AG04449 (cell line): ENCODE measurements at regions of chr14 and their contacts with region 1.

Region 1: GRCh38 chr14:75660630-75661494 is at the starts of genes ERG28 and TTLL5:
- DNase-seq: peak; percentile 93
- H3K4me3 ChIP-seq: peak within 1 kb of the TSS; percentile 98
- CTCF ChIP-seq: no peak

Region 2: DNA sequence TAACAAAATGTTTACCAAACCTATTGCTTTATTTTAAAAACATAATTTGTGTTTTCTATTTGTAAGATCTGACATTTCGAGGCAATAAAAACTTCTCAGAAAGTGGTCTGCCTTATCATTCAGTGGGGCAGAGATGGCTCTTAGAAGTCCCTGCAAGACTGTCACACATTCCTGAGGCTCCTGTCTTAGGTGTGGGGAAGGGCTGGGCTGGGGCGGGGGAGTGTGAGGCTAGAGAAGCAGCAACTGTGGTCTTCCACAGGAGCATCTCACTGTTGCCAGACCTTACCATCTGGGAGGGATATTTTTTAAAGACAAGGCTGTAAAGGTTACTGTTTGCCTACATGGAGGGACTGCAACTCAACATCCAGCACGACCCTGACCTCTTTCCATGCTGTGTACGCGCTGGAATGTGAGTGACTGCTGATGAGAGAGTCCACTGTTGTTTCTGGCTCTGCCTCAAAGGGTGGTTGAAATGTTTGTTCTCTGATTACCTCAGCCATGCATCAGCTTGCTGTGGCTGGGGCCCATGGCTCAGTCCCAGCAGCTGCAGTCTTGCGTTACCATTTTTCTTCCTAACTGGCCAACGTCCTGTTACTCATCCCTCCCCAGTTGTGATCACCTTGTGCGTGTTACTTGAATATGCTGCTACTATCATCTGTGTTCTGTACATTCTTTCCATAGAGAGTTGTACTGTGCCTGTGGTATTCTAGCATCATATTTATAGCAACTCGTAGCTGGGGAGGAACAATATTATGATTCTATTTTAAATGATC is 12.6 kb before region 1 on chr14:
- CTCF ChIA-PET with region 1: interaction called, 53 read pairs
- POLR2A ChIA-PET with region 1: interaction called, 5 read pairs
- DNase-seq: peak; percentile 93
- H3K4me3 ChIP-seq: no peak overlapping the region
- CTCF ChIP-seq: no peak

Region 3: GRCh38 chr14:75697386-75697785 is 36.5 kb after region 1 on chr14:
- CTCF ChIA-PET with region 1: no interaction called
- POLR2A ChIA-PET with region 1: no interaction called
- DNase-seq: no peak
- H3K4me3 ChIP-seq: no peak overlapping the region
- CTCF ChIP-seq: no peak